Activated T-helper 1 cell treated with anti-CD3 and anti-CD28 coated beads, Interleukin-12 subunit alpha, Interleukin-12 subunit beta, Interleukin-2, Interleukin-4 antibody, amounts not matched to agents 30 ng/mL and 10 ng/mL and 1 ng/mL, durations not matched to agents 14 hours and 24 hours and 36 hours (primary cell): ENCODE measurements at regions of chr19 and their contacts with region 1.

Region 1: DNA sequence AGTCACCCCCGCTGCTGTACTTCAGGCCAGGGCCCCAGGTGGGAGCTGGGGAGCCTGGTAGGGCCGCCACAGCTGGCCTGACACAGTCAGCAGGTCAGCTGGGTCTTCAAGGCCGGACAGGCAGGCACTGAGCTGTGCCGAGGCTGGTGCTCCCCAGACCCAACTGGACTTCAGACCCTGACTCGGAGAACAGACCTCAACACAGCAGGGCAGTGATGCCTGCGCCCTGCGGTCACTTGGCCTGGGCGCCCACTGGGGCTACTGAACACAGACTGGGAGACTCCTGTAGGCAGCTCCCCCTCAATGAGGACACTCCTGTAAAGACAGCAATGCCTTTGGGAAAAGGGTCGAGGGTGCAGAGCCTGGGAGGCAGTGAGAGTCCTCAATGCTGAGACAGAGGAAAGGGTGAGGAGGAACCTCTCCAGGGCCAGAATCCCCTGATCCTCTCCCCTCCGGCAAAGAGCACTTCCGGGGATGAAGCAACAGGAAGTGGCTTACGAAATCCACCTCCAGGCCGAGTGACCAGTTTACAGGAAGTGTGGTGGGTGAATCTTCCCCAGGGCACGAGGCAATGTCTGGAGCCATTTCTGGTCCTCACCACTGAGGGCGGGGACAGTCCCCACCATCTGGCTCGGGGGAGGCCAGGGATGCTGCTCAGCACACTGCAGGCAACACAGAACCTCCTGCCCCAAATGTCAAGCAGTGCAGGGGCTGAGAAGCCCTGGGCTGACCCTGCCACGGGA is 40.8 kb upstream of the ISYNA1 start:
- DNase-seq: peak; percentile 55
- H3K4me3 Mint-ChIP-seq: peak overlapping the region; percentile 71
- H3K27ac Mint-ChIP-seq: peak overlapping the region; percentile 92
- H3K4me1 Mint-ChIP-seq: peaks cover 71% of the 10 kb centered on the region
- H3K27me3 Mint-ChIP-seq: peaks cover 1% of the 10 kb centered on the region

Region 2: DNA sequence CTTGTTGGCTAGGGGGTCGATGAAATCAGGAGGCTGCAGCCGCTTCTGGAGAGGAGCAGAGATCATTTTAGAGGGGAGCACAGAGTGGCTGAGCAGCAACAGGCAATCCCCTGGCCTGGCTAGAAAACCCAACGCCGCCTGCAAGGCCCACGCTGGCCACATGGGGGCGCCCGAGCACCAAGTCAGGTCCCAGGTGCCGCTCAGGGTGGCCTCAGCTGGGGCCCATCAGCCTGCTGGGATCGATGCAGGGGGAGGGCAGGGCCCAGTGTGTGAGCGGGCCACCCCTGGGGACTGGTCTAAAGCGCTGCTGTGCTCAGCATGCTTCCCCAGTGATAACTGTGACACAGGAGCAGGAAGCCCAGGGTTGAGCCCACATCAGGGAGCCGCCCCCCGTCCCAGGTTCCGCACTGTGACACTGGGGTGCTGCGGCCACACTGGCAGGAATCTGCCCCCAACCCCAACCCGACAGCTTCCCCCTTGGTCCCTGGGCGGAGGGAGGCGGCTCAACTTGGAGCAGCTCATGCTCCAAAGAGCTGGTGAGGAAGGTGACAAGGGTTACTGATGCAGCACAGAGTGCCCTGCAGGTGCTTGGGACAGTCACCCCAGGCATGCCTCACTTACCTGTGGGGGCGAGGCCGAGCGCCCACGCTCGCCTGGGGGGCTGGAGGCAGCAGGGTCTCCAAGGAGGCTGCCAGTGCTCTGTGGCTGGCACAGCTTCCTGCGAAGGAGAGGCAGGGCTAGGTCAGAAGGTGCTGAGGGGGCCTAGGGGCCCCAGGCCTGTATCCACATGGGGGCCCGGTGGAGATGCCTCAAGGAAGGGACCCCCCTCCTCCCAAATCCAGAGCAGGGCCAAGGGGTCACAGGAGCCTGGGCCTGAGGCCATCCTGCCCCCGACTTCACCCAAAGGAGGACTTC is 27.6 kb before region 1 on chr19:
- intact Hi-C with region 1: loop called (anchors 1 kb)
- DNase-seq: peak; percentile 78
- H3K4me3 Mint-ChIP-seq: no peak overlapping the region
- H3K27ac Mint-ChIP-seq: no peak overlapping the region
- H3K4me1 Mint-ChIP-seq: no peaks in the 10 kb centered on the region
- H3K27me3 Mint-ChIP-seq: no peaks in the 10 kb centered on the region

Region 3: GRCh38 chr19:18496167-18496979 is 17.6 kb after region 1 on chr19:
- intact Hi-C with region 1: loop called (anchors 1 kb)
- DNase-seq: peak; percentile 56
- H3K4me3 Mint-ChIP-seq: peak overlapping the region; percentile 64
- H3K27ac Mint-ChIP-seq: peak overlapping the region; percentile 80
- H3K4me1 Mint-ChIP-seq: peaks cover 63% of the 10 kb centered on the region
- H3K27me3 Mint-ChIP-seq: no peaks in the 10 kb centered on the region

Region 4: GRCh38 chr19:18712981-18713380 is 234.2 kb after region 1 on chr19:
- intact Hi-C with region 1: no loop called
- DNase-seq: no peak
- H3K4me3 Mint-ChIP-seq: no peak overlapping the region
- H3K27ac Mint-ChIP-seq: no peak overlapping the region
- H3K4me1 Mint-ChIP-seq: no peaks in the 10 kb centered on the region
- H3K27me3 Mint-ChIP-seq: no peaks in the 10 kb centered on the region